ENCODE measurements at regions of chr17 and their contacts with region 1.

Region 1: DNA sequence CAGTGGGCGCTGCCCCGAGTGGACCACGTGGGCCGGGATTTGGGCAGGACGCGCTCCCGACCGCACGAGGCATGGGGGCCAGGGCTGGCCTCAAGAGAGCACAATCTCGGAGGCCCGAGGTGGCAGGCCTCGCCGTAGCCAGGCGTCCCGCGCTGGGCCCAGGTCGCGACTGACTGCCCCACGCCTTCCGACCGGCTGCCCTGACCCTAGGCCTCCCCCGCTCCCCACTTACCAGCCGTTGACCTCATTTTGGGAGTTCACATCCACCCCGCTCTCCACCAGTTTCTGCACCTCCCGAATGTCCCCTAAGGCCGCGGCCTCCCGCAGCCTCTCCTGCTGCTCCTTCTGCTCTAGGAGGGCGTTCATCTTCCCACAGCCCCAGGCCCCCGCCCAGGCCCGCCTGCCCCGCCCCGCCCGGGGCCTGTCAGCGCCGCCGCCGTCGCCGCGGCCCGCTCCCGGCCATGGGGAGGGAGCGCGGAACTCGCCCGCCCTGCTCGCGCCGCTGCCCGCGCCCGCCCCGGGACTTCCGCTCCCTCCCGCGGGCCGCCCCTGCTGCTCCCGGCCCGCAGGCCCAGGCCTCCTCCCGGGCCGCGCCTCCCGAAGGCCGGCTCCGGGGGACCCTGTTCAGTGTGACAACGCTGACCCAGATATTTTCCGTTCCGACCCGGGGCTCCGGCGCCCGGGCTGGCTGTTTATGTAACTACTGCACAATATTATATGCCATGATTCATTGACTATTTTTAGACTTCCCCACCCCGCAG is at the start of gene ANKRD40:
- DNase-seq: peak; percentile 95
- H3K4me3 Mint-ChIP-seq: peak within 1 kb of the TSS; percentile 96
- H3K27ac Mint-ChIP-seq: peak within 1 kb of the TSS; percentile 96
- H3K4me1 Mint-ChIP-seq: peaks cover 48% of the 10 kb centered on the region
- H3K27me3 Mint-ChIP-seq: no peaks in the 10 kb centered on the region
- total RNA-seq, gene ANKRD40: 27.4 to 27.8 TPM

Region 2: GRCh38 chr17:50431233-50431632 is 276.2 kb before region 1 on chr17:
- CTCF ChIA-PET with region 1: no interaction called
- POLR2A ChIA-PET with region 1: no interaction called
- intact Hi-C with region 1: no loop called
- DNase-seq: no peak
- H3K4me3 Mint-ChIP-seq: no peak overlapping the region
- H3K27ac Mint-ChIP-seq: no peak overlapping the region
- H3K4me1 Mint-ChIP-seq: peaks cover 14% of the 10 kb centered on the region
- H3K27me3 Mint-ChIP-seq: no peaks in the 10 kb centered on the region

Region 3: DNA sequence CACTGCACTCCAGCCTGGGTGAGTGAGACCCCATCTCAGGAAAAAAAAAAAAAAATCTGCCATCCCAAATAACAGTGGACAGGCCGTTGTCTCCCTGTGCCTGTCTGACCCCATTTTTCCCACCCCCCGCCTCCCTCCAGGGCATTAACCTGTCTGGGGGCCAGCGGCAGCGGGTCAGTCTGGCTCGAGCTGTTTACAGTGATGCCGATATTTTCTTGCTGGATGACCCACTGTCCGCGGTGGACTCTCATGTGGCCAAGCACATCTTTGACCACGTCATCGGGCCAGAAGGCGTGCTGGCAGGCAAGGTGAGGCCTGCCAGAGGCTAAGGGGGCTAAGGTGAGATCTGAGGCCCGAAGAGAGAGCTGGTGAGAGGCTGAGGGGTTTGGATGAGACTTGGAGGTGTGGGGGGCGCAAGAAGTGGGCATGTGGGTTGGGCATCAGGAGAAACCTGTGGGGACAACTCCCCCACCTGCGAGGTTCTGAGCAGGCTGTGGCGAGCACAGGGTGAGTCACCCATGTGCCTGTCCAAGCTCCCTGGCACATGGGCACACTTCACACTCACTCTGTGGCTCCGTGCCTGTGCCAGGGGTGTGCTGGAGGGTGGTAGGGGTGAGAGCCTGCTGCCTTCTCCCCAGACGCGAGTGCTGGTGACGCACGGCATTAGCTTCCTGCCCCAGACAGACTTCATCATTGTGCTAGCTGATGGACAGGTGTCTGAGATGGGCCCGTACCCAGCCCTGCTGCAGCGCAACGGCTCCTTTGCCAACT is 34.5 kb before region 1 on chr17:
- CTCF ChIA-PET with region 1: no interaction called
- POLR2A ChIA-PET with region 1: no interaction called
- intact Hi-C with region 1: no loop called
- DNase-seq: no peak
- H3K4me3 Mint-ChIP-seq: no peak overlapping the region
- H3K27ac Mint-ChIP-seq: no peak overlapping the region
- H3K4me1 Mint-ChIP-seq: no peaks in the 10 kb centered on the region
- H3K27me3 Mint-ChIP-seq: no peaks in the 10 kb centered on the region

Region 4: GRCh38 chr17:50689251-50689650 is 18.2 kb before region 1 on chr17:
- CTCF ChIA-PET with region 1: interaction called, 10 read pairs
- POLR2A ChIA-PET with region 1: no interaction called
- intact Hi-C with region 1: no loop called
- DNase-seq: no peak
- H3K4me3 Mint-ChIP-seq: no peak overlapping the region
- H3K27ac Mint-ChIP-seq: no peak overlapping the region
- H3K4me1 Mint-ChIP-seq: no peaks in the 10 kb centered on the region
- H3K27me3 Mint-ChIP-seq: no peaks in the 10 kb centered on the region

Region 5: GRCh38 chr17:50719144-50719923 is 11.9 kb after region 1 on chr17 and contains the start of gene LUC7L3:
- CTCF ChIA-PET with region 1: interaction called, 8 read pairs
- POLR2A ChIA-PET with region 1: interaction called, 14 read pairs
- intact Hi-C with region 1: loop called (anchors 1 kb)
- DNase-seq: peak; percentile 96
- H3K4me3 Mint-ChIP-seq: peak within 1 kb of the TSS; percentile 97
- H3K27ac Mint-ChIP-seq: peak within 1 kb of the TSS; percentile 98
- H3K4me1 Mint-ChIP-seq: peaks cover 26% of the 10 kb centered on the region
- H3K27me3 Mint-ChIP-seq: no peaks in the 10 kb centered on the region
- total RNA-seq, gene LUC7L3: 120 to 137 TPM

Measured in activated CD4-positive, alpha-beta memory T cell treated with anti-CD3 and anti-CD28 coated beads for 36 hours (primary cell).